ENCODE measurements at regions of chr13 and their contacts with region 1.

Region 1: GRCh38 chr13:99606324-99607066 is 105.2 kb downstream of the TM9SF2 start:
- DNase-seq: peak; percentile 81
- H3K4me3 ChIP-seq: peak within 1 kb of the TSS; percentile 53 to 92 (median 68)
- H3K27ac ChIP-seq: peak within 1 kb of the TSS; percentile 25
- H3K4me1 ChIP-seq: peaks cover 9% of the 10 kb centered on the region
- H3K27me3 ChIP-seq: peaks cover 0 to 4% of the 10 kb centered on the region in 2 experiments
- CTCF ChIP-seq: peak in 1 of 2 donors; percentile 8
- POLR2A ChIP-seq: peak; percentile 81

Region 2: DNA sequence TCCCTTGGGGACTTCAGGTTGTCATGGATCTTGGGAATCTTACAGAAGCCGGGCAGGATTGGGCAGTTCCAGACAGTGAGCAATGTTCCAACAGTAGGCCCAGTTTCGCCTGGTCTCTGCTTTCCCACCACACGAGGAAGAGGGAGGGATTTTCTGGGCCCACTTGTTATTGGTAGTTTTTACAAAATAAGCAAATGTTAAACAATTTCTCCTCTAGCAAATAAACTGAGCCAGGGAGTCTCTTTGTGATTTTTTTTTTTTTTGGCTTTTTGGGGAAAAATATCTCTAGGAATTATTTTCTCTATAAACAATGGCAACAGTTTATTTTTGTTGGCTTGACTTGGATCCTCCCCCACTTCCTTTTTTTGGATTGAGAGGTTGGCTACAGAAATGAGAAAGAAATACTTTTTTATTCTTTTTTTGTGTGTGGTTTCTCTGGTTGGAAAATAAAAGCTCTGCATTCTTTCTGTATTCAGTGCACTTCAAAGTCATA is 15.9 kb before region 1 on chr13:
- CTCF ChIA-PET with region 1: interaction called, 5 read pairs
- POLR2A ChIA-PET with region 1: no interaction called
- dilution Hi-C with region 1: no loop called
- intact Hi-C with region 1: loop called (anchors 1 kb)
- DNase-seq: peak; percentile 80
- H3K4me3 ChIP-seq: no peak overlapping the region
- H3K27ac ChIP-seq: no peak overlapping the region
- H3K4me1 ChIP-seq: peaks cover 13% of the 10 kb centered on the region
- H3K27me3 ChIP-seq: peaks cover 0 to 8% of the 10 kb centered on the region in 2 experiments
- CTCF ChIP-seq: no peak
- POLR2A ChIP-seq: no peak

Region 3: GRCh38 chr13:99796175-99796819 is 189.8 kb after region 1 on chr13:
- CTCF ChIA-PET with region 1: no interaction called
- POLR2A ChIA-PET with region 1: no interaction called
- dilution Hi-C with region 1: no loop called
- intact Hi-C with region 1: no loop called
- DNase-seq: peak; percentile 16
- H3K4me3 ChIP-seq: no peak overlapping the region
- H3K27ac ChIP-seq: no peak overlapping the region
- H3K4me1 ChIP-seq: no peaks in the 10 kb centered on the region
- H3K27me3 ChIP-seq: no peaks in the 10 kb centered on the region
- CTCF ChIP-seq: no peak
- POLR2A ChIP-seq: no peak

Measured in endothelial cell of umbilical vein (primary cell).